Psoas muscle (tissue), 8 donors: ENCODE measurements at regions of chr9 and their contacts with region 1.

Region 1: DNA sequence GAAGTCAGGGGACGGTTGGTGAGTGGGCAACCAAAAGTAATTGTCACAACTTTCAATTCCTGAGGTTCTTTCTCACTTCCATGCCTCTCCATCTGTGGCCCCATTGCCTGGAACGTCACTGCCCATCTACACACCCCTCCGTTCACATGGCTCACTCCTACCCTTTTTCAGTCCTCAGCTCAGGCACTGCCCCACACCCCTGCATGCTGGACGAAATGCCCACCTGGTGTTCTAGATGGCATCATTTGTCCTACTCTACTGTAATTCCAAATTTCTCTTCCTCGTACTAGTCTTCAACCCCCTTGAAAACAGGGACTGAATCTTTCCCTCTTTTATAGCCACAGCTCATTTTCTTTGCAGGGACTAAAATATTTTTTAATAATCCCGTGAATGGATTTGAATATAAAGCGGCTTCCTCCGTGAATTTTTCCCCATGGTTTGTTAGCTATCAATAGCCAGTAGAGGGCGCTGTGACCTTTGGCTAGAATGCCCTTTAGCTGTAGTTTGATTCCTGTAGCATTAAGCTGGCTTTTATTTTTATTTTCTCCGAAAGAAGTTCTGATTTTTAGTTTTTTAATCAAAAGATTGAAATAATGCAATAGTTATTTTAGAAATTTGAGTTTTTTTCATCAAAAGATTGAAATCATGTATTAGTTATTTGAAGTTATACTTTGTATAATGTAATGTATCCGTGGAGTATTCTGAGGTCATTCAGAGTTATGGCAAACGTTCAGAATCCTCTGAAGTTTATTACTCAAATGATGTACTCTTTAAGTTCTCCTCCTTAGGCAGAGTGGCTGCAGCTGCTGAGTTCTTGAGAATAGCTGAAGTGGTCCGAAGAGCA is 232.1 kb downstream of the SH3GL2 start:
- DNase-seq: peak in 1 of 2 donors; percentile 14
- ATAC-seq: no peak
- H3K4me3 ChIP-seq: no peak overlapping the region
- H3K27ac ChIP-seq: no peak overlapping the region
- H3K4me1 ChIP-seq: no peaks in the 10 kb centered on the region
- H3K27me3 ChIP-seq: peaks cover 0 to 2% (median 0%) of the 10 kb centered on the region in 3 donors
- CTCF ChIP-seq: peak; percentile 63

Region 2: GRCh38 chr9:18208154-18209059 is 397.5 kb after region 1 on chr9:
- intact Hi-C with region 1: loop called (anchors 5 kb)
- DNase-seq: peak in 1 of 2 donors; percentile 12
- ATAC-seq: no peak
- H3K4me3 ChIP-seq: no peak overlapping the region
- H3K27ac ChIP-seq: no peak overlapping the region
- H3K4me1 ChIP-seq: no peaks in the 10 kb centered on the region
- H3K27me3 ChIP-seq: no peaks in the 10 kb centered on the region
- CTCF ChIP-seq: no peak

Region 3: DNA sequence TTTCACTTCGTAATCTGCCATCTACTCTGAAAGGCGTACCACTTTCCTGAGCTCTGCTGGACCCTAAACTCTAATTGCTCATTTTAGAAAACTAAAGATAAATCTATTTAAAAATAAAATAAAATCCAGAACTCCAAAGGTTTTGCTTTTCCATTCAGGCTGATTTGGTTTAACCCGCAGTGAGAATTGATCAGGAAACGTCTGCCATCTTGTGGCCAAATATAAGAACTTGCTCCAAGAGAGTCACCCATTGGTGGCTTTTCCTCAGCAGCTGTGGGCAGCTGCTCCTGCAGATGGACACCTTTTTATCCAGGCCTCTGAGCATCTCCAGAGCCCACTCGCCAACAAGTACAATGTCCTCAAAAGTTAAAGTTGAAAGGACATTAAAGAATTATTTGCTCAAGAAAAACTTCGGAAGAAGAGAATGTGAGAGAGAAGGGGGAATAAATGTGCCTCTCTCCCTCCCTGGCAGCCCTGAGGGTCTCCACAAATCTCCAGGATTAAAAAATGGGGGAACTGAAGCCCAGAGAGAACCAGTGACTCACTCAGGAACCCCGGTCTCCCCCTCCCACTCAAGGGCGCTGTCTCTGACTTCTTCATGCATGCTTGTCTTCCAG is 1218.0 kb after region 1 on chr9:
- intact Hi-C with region 1: loop called in 1 of 2 experiments (anchors 10 kb)
- DNase-seq: no peak
- ATAC-seq: peak in 3 of 4 donors; percentile 62 to 84 (median 64)
- H3K4me3 ChIP-seq: no peak overlapping the region
- H3K27ac ChIP-seq: no peak overlapping the region
- H3K4me1 ChIP-seq: no peaks in the 10 kb centered on the region
- H3K27me3 ChIP-seq: peaks cover 0 to 3% (median 0%) of the 10 kb centered on the region in 3 donors
- CTCF ChIP-seq: peak; percentile 77